Calu3 (cell line): ENCODE measurements at regions of chr2 and their contacts with region 1.

Region 1: GRCh38 chr2:54267577-54267976 is 11.5 kb upstream of the TSPYL6 start:
- DNase-seq: no peak
- H3K4me3 Mint-ChIP-seq: no peak overlapping the region
- H3K27ac Mint-ChIP-seq: no peak overlapping the region
- H3K4me1 Mint-ChIP-seq: no peaks in the 10 kb centered on the region
- H3K27me3 Mint-ChIP-seq: no peaks in the 10 kb centered on the region
- CTCF ChIP-seq: no peak

Region 2: DNA sequence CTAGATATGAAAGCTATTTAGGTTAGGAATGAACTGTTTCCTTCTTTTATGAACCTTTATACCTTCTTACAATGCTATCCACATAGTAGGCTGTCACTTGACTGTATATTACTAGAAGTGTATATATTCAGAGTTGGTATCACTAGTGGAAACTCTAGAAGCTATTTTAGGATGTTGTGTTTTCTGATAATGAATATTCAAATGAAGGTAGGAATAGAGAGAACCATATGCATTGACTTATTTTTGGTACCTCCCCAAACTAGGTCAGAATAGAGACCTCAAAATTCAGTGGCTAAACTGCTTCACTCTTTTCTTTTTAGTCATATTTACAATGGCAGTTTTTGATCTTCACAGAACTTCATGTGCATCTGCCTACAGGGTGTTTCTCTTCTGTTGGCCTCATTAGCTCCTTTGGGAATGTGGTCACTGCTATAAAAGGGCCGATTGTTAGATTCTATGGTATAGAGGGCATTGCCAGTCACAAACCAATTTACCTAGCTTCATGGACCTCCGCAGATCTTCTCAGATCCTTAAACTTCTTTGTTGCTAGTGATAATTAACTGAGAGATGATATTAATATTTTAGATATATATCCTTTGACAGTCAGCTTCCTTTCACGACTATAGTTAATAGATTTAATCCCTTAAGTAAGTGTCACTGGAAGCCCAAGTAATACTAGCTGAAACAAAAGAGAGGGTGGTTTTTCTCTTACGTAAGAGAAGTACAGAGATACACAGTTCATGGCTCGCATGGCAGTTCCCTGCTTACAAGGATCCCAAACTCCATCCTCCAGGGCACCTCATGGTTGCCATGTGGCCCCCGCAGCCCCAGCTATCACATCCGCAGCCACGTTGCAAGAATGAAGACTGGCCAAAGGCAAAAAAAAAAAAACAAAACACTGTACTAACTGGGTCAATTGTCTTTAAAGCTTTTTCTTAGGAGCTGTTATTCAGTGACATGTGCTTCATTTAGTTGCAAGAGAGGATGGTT is 72.5 kb before region 1 on chr2:
- CTCF ChIA-PET with region 1: no interaction called
- intact Hi-C with region 1: no loop called
- DNase-seq: no peak
- H3K4me3 Mint-ChIP-seq: no peak overlapping the region
- H3K27ac Mint-ChIP-seq: no peak overlapping the region
- H3K4me1 Mint-ChIP-seq: no peaks in the 10 kb centered on the region
- H3K27me3 Mint-ChIP-seq: no peaks in the 10 kb centered on the region
- CTCF ChIP-seq: no peak

Region 3: DNA sequence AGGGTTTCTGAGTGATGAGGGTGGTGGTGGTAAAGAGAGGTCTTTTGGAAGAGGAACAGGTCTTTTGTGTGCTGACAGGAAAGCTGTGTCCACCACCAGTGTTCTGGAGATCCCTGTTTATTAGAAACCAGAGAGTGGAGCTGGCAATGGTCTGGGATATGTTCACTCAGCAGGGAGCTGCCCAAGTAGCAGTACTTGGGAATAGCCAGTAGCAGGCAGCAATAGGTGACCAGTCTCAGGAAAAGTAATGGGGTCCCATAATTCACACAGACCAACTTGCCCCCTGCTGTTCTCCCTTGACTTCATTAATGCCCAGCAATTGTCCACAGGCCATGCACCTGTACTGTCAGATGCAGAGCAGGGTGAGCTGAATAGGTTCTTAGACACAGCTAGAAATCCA is 13.4 kb before region 1 on chr2:
- CTCF ChIA-PET with region 1: interaction called, 14 read pairs
- intact Hi-C with region 1: no loop called
- DNase-seq: no peak
- H3K4me3 Mint-ChIP-seq: no peak overlapping the region
- H3K27ac Mint-ChIP-seq: no peak overlapping the region
- H3K4me1 Mint-ChIP-seq: no peaks in the 10 kb centered on the region
- H3K27me3 Mint-ChIP-seq: no peaks in the 10 kb centered on the region
- CTCF ChIP-seq: no peak

Region 4: DNA sequence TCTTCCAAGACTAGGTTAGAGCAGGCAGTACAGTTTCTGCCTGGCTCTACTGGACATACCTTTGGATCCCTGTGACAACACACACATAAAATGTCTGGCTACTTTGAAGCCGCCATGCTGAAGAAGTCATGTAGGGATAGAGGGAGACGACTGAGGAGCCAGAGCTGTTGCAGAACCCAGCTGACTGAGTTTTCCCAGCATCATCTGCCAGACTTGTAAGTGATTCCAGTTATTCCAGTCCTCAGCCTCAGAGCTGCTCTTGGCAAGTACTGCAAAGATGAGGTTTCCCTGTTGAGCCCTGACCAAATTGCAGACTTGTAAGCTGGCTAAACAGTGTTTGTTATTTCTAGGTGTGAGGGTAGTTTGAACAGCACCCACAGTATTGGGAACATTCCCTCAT is 20.0 kb after region 1 on chr2:
- CTCF ChIA-PET with region 1: no interaction called
- intact Hi-C with region 1: no loop called
- DNase-seq: no peak
- H3K4me3 Mint-ChIP-seq: no peak overlapping the region
- H3K27ac Mint-ChIP-seq: no peak overlapping the region
- H3K4me1 Mint-ChIP-seq: no peaks in the 10 kb centered on the region
- H3K27me3 Mint-ChIP-seq: no peaks in the 10 kb centered on the region
- CTCF ChIP-seq: no peak